Common myeloid progenitor, CD34-positive (primary cell): ENCODE measurements at regions of chr20 and their contacts with region 1.

Region 1: DNA sequence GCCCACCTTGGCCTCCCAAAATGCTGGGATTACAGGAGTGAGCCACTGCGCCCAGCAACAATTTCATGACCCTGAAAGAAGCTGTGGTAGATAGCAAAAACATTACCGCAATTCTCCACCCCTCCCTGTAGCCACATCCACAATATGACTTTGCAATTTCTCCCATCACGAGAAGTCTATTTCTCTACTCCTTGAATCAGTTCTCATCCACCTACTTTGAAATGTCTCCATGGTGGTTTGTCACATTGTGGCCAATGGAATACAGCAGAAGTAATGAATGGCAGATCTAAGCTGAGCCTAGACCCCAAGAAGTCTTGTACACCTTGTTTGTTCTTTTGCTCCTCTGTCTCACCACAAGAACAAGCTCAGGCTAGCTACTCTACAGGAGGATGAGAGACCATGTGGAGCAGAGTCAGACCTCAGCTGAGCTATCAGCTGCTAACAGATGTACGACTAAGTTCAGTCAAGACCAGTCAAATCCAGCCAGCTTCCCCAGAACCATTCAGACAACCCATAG is 6.3 kb downstream of the OXT start:
- DNase-seq: peak; percentile 82 to 96 (median 93)
- H3K4me3 ChIP-seq: peak overlapping the region in 2 of 7 experiments; percentile 34 to 51
- H3K27ac ChIP-seq: peak overlapping the region in 1 of 2 experiments; percentile 49
- H3K4me1 ChIP-seq: peaks cover 5 to 77% (median 53%) of the 10 kb centered on the region in 4 experiments
- H3K27me3 ChIP-seq: no peaks in the 10 kb centered on the region

Region 2: GRCh38 chr20:3051385-3052019 is 26.2 kb before region 1 on chr20:
- CTCF ChIA-PET with region 1: interaction called, 19 read pairs
- POLR2A ChIA-PET with region 1: no interaction called
- DNase-seq: peak in 2 of 3 donors; percentile 56 to 65
- H3K4me3 ChIP-seq: no peak overlapping the region
- H3K27ac ChIP-seq: no peak overlapping the region
- H3K4me1 ChIP-seq: peaks cover 0 to 15% (median 10%) of the 10 kb centered on the region in 4 experiments
- H3K27me3 ChIP-seq: no peaks in the 10 kb centered on the region

Region 3: DNA sequence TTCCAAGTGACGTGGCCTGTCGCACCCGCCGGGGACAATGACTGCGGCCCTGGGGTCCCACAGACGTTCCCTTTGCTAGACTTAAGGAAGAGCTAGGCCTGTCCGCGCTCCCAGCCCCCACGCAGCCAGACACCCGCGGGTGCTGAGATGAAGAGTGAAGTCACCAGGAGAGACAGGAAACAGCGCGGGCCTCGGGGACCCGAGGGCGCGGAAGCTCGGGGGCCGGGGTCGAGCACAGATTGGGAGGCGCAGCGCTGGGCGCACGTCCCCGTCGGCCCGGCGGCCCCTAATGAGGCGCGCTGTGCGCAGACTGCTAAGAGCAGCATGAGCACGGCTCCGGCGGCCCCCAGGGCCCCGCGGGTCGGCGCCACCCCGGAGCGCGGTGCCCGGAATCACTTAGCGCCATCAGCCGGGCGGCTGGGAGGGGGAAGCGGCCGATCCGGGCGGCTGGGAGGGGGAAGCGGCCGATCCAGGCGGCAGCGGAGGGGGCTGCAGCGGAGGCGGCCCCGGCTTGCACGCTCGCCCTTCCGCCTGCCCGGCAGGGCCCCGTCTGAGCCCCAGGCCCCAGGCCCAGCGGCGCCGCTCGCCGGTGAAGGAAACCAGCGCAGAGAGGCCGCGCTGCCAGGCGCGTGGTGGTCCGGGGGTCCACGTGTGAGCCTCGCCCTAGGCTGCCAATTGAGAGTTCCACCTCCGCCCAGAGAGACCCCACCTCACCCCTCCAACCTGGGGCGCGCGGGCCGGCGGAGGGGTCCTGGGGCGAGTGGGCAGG is 15.1 kb after region 1 on chr20:
- CTCF ChIA-PET with region 1: interaction called, 19 read pairs
- POLR2A ChIA-PET with region 1: interaction called, 13 read pairs
- DNase-seq: peak in 2 of 3 donors; percentile 66 to 78
- H3K4me3 ChIP-seq: peak overlapping the region in 6 of 7 experiments; percentile 12 to 70 (median 57)
- H3K27ac ChIP-seq: peak overlapping the region; percentile 77 to 79
- H3K4me1 ChIP-seq: peaks cover 10 to 65% (median 60%) of the 10 kb centered on the region in 4 experiments
- H3K27me3 ChIP-seq: no peaks in the 10 kb centered on the region

Region 4: GRCh38 chr20:3101737-3102574 is 24.3 kb after region 1 on chr20:
- CTCF ChIA-PET with region 1: interaction called, 10 read pairs
- POLR2A ChIA-PET with region 1: no interaction called
- DNase-seq: peak; percentile 69 to 93 (median 91)
- H3K4me3 ChIP-seq: peak overlapping the region in 3 of 7 experiments; percentile 15 to 45 (median 28)
- H3K27ac ChIP-seq: no peak overlapping the region
- H3K4me1 ChIP-seq: peaks cover 3 to 54% (median 42%) of the 10 kb centered on the region in 4 experiments
- H3K27me3 ChIP-seq: no peaks in the 10 kb centered on the region